PC-9 (cell line): ENCODE measurements at regions of chr6 and their contacts with region 1.

Region 1: GRCh38 chr6:6676910-6677441 is 88.5 kb downstream of the LY86 start:
- DNase-seq: peak; percentile 68 to 82
- H3K4me3 ChIP-seq: no peak overlapping the region
- H3K27ac ChIP-seq: no peak overlapping the region
- H3K4me1 ChIP-seq: peaks cover 33% of the 10 kb centered on the region
- H3K27me3 ChIP-seq: no peaks in the 10 kb centered on the region
- CTCF ChIP-seq: peak; percentile 92

Region 2: DNA sequence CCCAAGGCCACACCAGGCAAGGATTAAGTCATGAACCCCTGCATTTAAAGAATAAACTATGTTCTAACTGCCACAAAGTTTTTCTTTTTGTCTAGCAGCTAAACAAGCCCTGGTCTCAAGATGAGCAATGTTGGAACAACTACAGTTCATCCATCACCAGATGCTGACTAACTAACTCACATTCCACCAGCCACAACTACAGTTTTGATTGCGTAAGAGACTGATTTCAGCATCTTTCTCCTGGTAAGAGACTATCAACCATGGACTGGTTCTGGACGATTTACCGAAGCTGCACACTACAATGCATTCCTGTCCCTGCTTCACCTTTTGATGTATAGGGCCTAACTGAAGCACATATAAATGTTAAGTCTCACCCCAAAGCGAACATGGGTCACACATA is 399.6 kb before region 1 on chr6:
- CTCF ChIA-PET with region 1: no interaction called
- POLR2A ChIA-PET with region 1: no interaction called
- intact Hi-C with region 1: no loop called
- DNase-seq: peak in 1 of 2 experiments; percentile 35
- H3K4me3 ChIP-seq: no peak overlapping the region
- H3K27ac ChIP-seq: no peak overlapping the region
- H3K4me1 ChIP-seq: no peaks in the 10 kb centered on the region
- H3K27me3 ChIP-seq: 0 out of 2 replicates have a peak, but pooled peaks cover 6% of the 10 kb centered on the region
- CTCF ChIP-seq: no peak

Region 3: GRCh38 chr6:6696867-6697531 is 20.0 kb after region 1 on chr6:
- CTCF ChIA-PET with region 1: interaction called, 10 read pairs
- POLR2A ChIA-PET with region 1: interaction called, 20 read pairs
- intact Hi-C with region 1: loop called (anchors 1 kb)
- DNase-seq: peak; percentile 49 to 57
- H3K4me3 ChIP-seq: no peak overlapping the region
- H3K27ac ChIP-seq: no peak overlapping the region
- H3K4me1 ChIP-seq: peaks cover 29% of the 10 kb centered on the region
- H3K27me3 ChIP-seq: no peaks in the 10 kb centered on the region
- CTCF ChIP-seq: peak; percentile 71

Region 4: DNA sequence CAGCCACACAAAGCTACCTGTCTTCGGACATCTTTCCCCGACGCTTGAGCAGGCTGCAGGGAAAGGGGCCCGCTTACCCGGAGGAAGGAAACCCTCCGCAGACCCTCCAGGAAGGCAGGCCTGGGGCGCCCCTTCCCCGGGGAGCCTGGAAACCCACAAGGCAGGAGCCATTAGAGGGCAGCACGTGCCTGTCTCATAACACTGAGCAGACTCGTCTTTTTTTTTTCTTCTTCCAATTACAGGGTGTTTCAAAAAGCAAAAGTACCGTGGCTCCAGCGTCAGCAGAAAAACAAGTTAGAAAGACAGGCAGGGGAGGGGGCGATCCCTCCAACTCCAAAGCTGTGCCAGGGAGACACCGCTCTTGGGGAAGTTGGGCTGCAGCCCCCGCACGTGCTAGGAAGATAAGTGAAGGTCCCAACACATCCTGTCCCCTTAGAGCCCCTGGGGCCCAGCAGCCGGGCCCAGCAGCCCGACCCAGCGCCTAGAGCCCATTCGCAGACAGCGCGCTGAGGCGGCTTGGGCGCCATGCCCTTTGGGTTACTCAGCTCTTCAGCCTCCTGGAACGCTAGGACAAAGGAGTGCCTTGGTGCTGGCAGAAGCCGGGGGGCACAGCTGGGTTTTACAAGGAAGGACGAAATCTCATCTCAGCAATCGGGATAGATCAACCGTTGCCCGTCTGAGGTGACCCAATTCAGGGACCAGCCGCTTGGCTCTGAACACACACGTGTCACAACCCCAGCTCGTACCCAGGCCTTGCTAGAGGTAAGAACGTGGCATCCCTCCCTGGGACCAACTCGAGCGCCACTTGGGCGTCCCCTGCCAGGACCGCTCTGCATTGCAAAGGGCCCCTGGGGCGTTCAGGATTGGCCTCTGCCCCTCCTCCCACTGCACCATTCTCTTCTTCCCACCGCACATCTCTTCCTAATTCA is 47.8 kb after region 1 on chr6:
- CTCF ChIA-PET with region 1: no interaction called
- POLR2A ChIA-PET with region 1: no interaction called
- intact Hi-C with region 1: loop called (anchors 1 kb)
- DNase-seq: peak in 1 of 2 experiments; percentile 70
- H3K4me3 ChIP-seq: no peak overlapping the region
- H3K27ac ChIP-seq: no peak overlapping the region
- H3K4me1 ChIP-seq: peaks cover 14% of the 10 kb centered on the region
- H3K27me3 ChIP-seq: no peaks in the 10 kb centered on the region
- CTCF ChIP-seq: peak; percentile 64

Region 5: DNA sequence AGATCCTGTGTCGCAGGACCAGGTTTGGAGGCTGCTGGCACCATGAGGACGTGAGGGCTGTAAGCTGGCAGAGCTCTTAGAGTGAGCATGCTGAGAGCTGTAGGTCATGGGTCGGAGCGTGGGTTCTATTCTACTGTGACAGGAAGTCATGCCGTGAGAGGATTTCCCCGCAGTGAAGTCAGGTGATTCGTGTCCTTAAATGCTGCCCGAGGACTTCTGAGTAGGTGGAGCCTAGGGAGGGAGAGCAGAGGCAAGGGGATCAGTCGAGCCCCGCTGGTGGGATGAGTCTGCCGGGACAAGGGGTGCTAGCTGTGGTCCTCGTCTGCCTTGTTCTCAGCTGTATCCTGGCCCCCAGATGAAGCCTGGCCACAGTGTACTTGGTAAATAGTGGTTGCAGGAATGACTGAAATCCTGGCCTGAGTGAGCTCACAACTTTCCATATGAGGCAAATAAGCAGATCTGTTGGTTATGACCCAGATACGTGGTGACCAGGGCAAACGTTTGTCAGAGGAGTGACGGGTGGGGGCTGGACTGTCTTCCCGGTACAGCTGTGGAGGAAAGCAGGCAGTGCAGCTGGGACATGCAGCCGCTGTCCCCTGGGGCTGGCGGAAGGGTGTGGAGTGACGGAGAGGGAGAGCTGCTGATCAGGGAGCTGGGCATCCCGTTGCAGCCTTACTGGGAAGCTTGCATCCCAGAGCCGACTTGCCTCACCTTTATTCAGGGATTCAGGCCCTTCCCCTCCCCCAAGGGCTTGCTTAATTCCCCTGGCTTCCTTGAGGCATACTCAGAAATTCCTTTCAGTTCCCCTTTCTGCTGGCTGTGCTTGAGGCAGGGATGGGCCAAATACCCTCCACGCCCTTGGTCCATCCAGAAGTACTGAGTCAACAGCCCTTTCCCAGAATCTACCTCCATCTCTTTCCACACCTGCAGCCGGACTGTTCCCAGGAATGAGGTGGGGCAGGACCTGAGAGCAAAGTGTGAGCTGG is 179.9 kb after region 1 on chr6:
- CTCF ChIA-PET with region 1: no interaction called
- POLR2A ChIA-PET with region 1: no interaction called
- intact Hi-C with region 1: loop called (anchors 5 kb)
- DNase-seq: peak; percentile 80 to 92
- H3K4me3 ChIP-seq: peak overlapping the region; percentile 40; the same call in 1 of the 2 replicates
- H3K27ac ChIP-seq: peak overlapping the region; percentile 96
- H3K4me1 ChIP-seq: peaks cover 32% of the 10 kb centered on the region
- H3K27me3 ChIP-seq: no peaks in the 10 kb centered on the region
- CTCF ChIP-seq: no peak

Region 6: GRCh38 chr6:7107578-7108195 is 430.7 kb after region 1 on chr6 and contains the start of gene RREB1:
- CTCF ChIA-PET with region 1: interaction called, 3 read pairs
- POLR2A ChIA-PET with region 1: no interaction called
- intact Hi-C with region 1: loop called (anchors 1 kb)
- DNase-seq: peak in 1 of 2 experiments; percentile 40
- H3K4me3 ChIP-seq: peak within 1 kb of the TSS; percentile 90
- H3K27ac ChIP-seq: peak within 1 kb of the TSS; percentile 69
- H3K4me1 ChIP-seq: peaks cover 29% of the 10 kb centered on the region
- H3K27me3 ChIP-seq: no peaks in the 10 kb centered on the region
- CTCF ChIP-seq: no peak
- total RNA-seq, gene RREB1: 29.2 and 38.4 TPM in 2 replicates

Region 7: GRCh38 chr6:7238900-7239589 is 562.1 kb after region 1 on chr6:
- CTCF ChIA-PET with region 1: interaction called, 3 read pairs
- POLR2A ChIA-PET with region 1: no interaction called
- intact Hi-C with region 1: loop called (anchors 1 kb)
- DNase-seq: peak; percentile 53 to 84
- H3K4me3 ChIP-seq: no peak overlapping the region
- H3K27ac ChIP-seq: no peak overlapping the region
- H3K4me1 ChIP-seq: peaks cover 57% of the 10 kb centered on the region
- H3K27me3 ChIP-seq: no peaks in the 10 kb centered on the region
- CTCF ChIP-seq: peak; percentile 67

Region 8: GRCh38 chr6:7615611-7616383 is 938.8 kb after region 1 on chr6:
- CTCF ChIA-PET with region 1: no interaction called
- POLR2A ChIA-PET with region 1: no interaction called
- intact Hi-C with region 1: loop called (anchors 2 kb)
- DNase-seq: peak; percentile 47
- H3K4me3 ChIP-seq: no peak overlapping the region
- H3K27ac ChIP-seq: no peak overlapping the region
- H3K4me1 ChIP-seq: peaks cover 7% of the 10 kb centered on the region
- H3K27me3 ChIP-seq: no peaks in the 10 kb centered on the region
- CTCF ChIP-seq: peak; percentile 74